OCI-LY7 (cell line): ENCODE measurements at regions of chr9 and their contacts with region 1.

Region 1: DNA sequence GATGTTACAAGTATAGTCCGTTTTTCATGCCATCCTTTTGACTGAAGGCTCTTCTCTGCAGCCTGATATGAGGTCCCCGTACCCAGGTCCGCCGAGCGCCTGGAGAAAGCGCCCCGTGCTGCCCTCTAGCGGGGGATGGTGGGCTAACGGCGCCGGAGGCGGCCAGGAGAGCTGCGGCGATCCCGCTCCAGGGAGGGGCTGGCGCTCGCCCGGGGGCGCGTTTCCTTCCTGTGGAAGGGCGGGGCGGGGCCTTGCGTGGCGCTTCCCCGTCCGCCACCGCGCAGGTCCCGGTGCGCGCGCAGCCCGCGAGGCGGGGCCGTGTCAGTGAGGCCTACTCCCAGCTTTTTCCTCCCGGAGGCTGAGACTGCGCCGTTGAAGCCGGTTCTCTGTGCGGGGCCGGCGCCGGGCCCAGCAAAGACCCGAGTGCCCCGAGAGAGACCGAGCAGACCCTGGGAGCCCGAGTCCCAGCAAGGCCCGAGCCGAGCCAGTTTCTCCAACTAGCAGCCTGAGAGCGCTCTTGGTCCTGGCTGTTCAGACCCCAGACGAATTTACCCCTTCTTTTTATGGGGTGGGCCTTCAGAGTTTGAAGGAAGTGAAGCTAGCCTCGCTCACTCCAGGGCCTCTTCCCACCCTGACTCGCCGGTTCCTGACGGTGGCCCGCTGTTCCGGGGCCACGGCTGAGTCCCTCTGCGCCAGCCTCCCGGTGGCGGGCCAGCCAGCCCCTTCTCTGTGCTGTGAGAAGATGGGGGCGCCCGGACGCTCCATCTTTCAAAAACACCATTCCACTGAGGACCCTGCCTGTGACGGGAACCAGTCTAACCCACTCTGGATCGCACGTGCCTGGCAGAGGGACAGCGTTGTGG is 9.7 kb upstream of the PHF2 start:
- DNase-seq: peak; percentile 97
- H3K4me3 ChIP-seq: peak overlapping the region; percentile 70
- H3K27ac ChIP-seq: peak overlapping the region; percentile 70
- H3K4me1 ChIP-seq: peaks cover 23% of the 10 kb centered on the region
- CTCF ChIP-seq: peak; percentile 89

Region 2: GRCh38 chr9:93262537-93263242 is 303.9 kb before region 1 on chr9:
- CTCF ChIA-PET with region 1: no interaction called
- POLR2A ChIA-PET with region 1: no interaction called
- intact Hi-C with region 1: loop called (anchors 2 kb)
- DNase-seq: no peak
- H3K4me3 ChIP-seq: no peak overlapping the region
- H3K27ac ChIP-seq: peak overlapping the region; percentile 64
- H3K4me1 ChIP-seq: peaks cover 69% of the 10 kb centered on the region
- CTCF ChIP-seq: no peak

Region 3: GRCh38 chr9:93319992-93320500 is 246.6 kb before region 1 on chr9:
- CTCF ChIA-PET with region 1: no interaction called
- POLR2A ChIA-PET with region 1: no interaction called
- intact Hi-C with region 1: loop called (anchors 10 kb)
- DNase-seq: no peak
- H3K4me3 ChIP-seq: no peak overlapping the region
- H3K27ac ChIP-seq: no peak overlapping the region
- H3K4me1 ChIP-seq: peaks cover 8% of the 10 kb centered on the region
- CTCF ChIP-seq: no peak

Region 4: DNA sequence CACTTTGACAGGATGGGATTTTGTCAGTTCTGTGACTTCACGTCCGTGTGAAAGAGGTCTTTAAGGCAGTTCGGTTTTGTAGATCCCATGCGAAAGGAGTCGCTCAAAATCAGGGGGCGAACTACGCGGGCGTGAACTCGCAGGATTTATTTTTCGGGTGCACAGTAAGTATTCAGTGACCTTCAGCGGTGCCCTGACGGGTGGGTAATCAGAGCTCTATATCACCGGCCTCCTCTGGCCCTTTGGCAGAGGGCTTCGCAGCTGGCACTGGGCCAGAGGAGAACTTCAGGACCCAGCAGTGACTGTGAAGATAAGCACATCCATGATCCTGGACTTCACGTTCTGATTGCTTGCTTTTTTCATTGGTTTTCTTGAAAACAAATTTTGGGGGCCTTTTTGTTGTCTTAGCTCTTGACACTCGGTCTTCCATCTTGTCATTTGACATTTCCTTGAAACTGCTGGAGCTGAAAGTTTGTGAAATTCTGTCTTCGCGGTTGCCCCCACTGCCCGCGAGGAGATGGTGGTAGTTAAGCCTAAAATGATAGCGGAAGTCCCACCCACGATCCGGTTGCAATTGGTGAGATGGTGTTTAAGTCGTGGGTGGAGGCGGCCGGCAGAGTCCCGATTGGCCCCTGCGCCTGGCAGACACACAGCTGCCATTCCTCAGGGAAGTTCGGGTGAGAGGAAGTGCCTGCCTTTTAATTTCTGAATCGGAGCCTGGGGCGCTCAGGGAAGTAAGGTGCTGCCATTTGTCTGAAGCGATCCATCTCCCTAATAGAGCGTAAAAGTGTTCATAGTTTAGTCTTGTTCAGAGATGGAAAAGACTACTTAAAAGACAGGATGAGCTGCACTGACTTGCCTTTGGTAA is 113.4 kb before region 1 on chr9 and contains the start of gene FAM120AOS:
- CTCF ChIA-PET with region 1: no interaction called
- POLR2A ChIA-PET with region 1: interaction called, 8 read pairs
- intact Hi-C with region 1: loop called (anchors 1 kb)
- DNase-seq: peak; percentile 91
- H3K4me3 ChIP-seq: peak within 1 kb of the TSS; percentile 83
- H3K27ac ChIP-seq: peak within 1 kb of the TSS; percentile 74
- H3K4me1 ChIP-seq: peaks cover 58% of the 10 kb centered on the region
- CTCF ChIP-seq: no peak
- total RNA-seq, gene FAM120AOS: 47.1 and 50.2 TPM in 2 replicates